ENCODE measurements at regions of chr15 and their contacts with region 1.

Region 1: GRCh38 chr15:31344823-31345605 is 18.4 kb downstream of the KLF13 start:
- DNase-seq: peak in 1 of 5 donors; percentile 47
- H3K4me3 ChIP-seq: peak overlapping the region; percentile 54 to 60
- H3K4me3 Mint-ChIP-seq: peak overlapping the region; percentile 83 to 95 (median 90)
- H3K27ac ChIP-seq: peak overlapping the region; percentile 74
- H3K27ac Mint-ChIP-seq: peak overlapping the region; percentile 84 to 99 (median 98)
- H3K4me1 ChIP-seq: peaks cover 100% of the 10 kb centered on the region
- H3K4me1 Mint-ChIP-seq: peaks cover 70 to 100% (median 91%) of the 10 kb centered on the region in 4 donors
- H3K27me3 ChIP-seq: no peaks in the 10 kb centered on the region
- H3K27me3 Mint-ChIP-seq: no peaks in the 10 kb centered on the region

Region 2: GRCh38 chr15:31272558-31273257 is 72.3 kb before region 1 on chr15:
- CTCF ChIA-PET with region 1: no interaction called
- POLR2A ChIA-PET with region 1: no interaction called
- intact Hi-C with region 1: no loop called
- DNase-seq: no peak
- H3K4me3 ChIP-seq: no peak overlapping the region
- H3K4me3 Mint-ChIP-seq: no peak overlapping the region
- H3K27ac ChIP-seq: no peak overlapping the region
- H3K27ac Mint-ChIP-seq: no peak overlapping the region
- H3K4me1 ChIP-seq: peaks cover 17% of the 10 kb centered on the region
- H3K4me1 Mint-ChIP-seq: peaks cover 13 to 31% (median 18%) of the 10 kb centered on the region in 4 donors
- H3K27me3 ChIP-seq: no peaks in the 10 kb centered on the region
- H3K27me3 Mint-ChIP-seq: no peaks in the 10 kb centered on the region

Region 3: GRCh38 chr15:31332020-31332680 is 12.9 kb before region 1 on chr15:
- CTCF ChIA-PET with region 1: interaction called, 5 read pairs
- POLR2A ChIA-PET with region 1: interaction called, 528 read pairs
- intact Hi-C with region 1: loop called (anchors 1 kb)
- DNase-seq: no peak
- H3K4me3 ChIP-seq: peak overlapping the region in 1 of 2 donors; percentile 29
- H3K4me3 Mint-ChIP-seq: peak overlapping the region; percentile 91 to 97 (median 94)
- H3K27ac ChIP-seq: peak overlapping the region; percentile 50
- H3K27ac Mint-ChIP-seq: peak overlapping the region; percentile 70 to 99 (median 93)
- H3K4me1 ChIP-seq: peaks cover 83% of the 10 kb centered on the region
- H3K4me1 Mint-ChIP-seq: peaks cover 59 to 88% (median 74%) of the 10 kb centered on the region in 4 donors
- H3K27me3 ChIP-seq: no peaks in the 10 kb centered on the region
- H3K27me3 Mint-ChIP-seq: no peaks in the 10 kb centered on the region